ENCODE measurements at regions of chr3 and their contacts with region 1.

Region 1: GRCh38 chr3:174457758-174458157 is 401.4 kb upstream of the NAALADL2 start:
- DNase-seq: no peak
- ATAC-seq: no peak

Region 2: DNA sequence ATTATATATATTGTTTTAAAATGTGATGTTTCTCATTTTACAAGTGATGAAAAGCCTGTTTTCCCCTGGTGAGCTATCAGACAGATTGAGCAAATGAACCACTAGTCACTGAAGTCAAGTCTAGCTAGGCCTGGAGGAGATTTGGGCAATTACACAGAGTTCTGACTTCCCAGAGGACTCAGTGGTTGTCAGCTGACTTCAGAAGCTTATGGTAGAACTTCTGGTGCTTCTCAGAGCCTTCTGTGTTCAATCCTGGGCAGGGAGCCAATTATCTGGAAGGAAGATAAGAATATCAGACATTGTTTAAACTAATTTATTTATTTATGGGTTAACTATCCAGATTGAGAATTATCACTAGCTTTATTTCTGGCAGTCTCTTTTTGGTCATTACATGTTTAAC is 363.7 kb after region 1 on chr3:
- intact Hi-C with region 1: loop called (anchors 5 kb)
- DNase-seq: no peak
- ATAC-seq: peak; percentile 63

Measured in left ventricle myocardium superior (tissue), 1 donor.